ENCODE measurements at regions of chr11 and their contacts with region 1.

Region 1: GRCh38 chr11:6612213-6613041 is at the start of gene TAF10:
- DNase-seq: peak; percentile 89 to 97 (median 95)
- ATAC-seq: peak; percentile 94
- H3K4me3 ChIP-seq: peak within 1 kb of the TSS; percentile 83
- H3K4me3 Mint-ChIP-seq: peak within 1 kb of the TSS in 6 of 10 donors; percentile 84 to 94 (median 92)
- H3K27ac ChIP-seq: peak within 1 kb of the TSS; percentile 91
- H3K27ac Mint-ChIP-seq: peak within 1 kb of the TSS in 5 of 9 donors; percentile 90 to 98 (median 96)
- H3K4me1 ChIP-seq: peaks cover 25% of the 10 kb centered on the region in 2 donors
- H3K4me1 Mint-ChIP-seq: peaks cover 9 to 46% (median 33%) of the 10 kb centered on the region in 7 donors
- H3K27me3 ChIP-seq: no peaks in the 10 kb centered on the region
- H3K27me3 Mint-ChIP-seq: no peaks in the 10 kb centered on the region
- total RNA-seq, gene TAF10: 116 to 135 (median 128) TPM

Region 2: GRCh38 chr11:6389921-6390724 is 222.3 kb before region 1 on chr11 and contains the start of gene SMPD1:
- CTCF ChIA-PET with region 1: no interaction called
- POLR2A ChIA-PET with region 1: no interaction called
- intact Hi-C with region 1: loop called in 1 of 2 experiments (anchors 1 kb)
- DNase-seq: peak; percentile 85 to 94 (median 92)
- ATAC-seq: peak; percentile 97
- H3K4me3 ChIP-seq: peak within 1 kb of the TSS; percentile 94
- H3K4me3 Mint-ChIP-seq: peak within 1 kb of the TSS; percentile 91 to 98 (median 94)
- H3K27ac ChIP-seq: peak within 1 kb of the TSS; percentile 95
- H3K27ac Mint-ChIP-seq: peak within 1 kb of the TSS; percentile 93 to 100 (median 99)
- H3K4me1 ChIP-seq: peaks cover 25 to 53% of the 10 kb centered on the region in 2 donors
- H3K4me1 Mint-ChIP-seq: peaks cover 31 to 74% (median 66%) of the 10 kb centered on the region in 7 donors
- H3K27me3 ChIP-seq: no peaks in the 10 kb centered on the region
- H3K27me3 Mint-ChIP-seq: peaks cover 0 to 13% (median 0%) of the 10 kb centered on the region in 5 donors
- total RNA-seq, gene SMPD1: 43.0 to 70.9 (median 55.4) TPM

Region 3: DNA sequence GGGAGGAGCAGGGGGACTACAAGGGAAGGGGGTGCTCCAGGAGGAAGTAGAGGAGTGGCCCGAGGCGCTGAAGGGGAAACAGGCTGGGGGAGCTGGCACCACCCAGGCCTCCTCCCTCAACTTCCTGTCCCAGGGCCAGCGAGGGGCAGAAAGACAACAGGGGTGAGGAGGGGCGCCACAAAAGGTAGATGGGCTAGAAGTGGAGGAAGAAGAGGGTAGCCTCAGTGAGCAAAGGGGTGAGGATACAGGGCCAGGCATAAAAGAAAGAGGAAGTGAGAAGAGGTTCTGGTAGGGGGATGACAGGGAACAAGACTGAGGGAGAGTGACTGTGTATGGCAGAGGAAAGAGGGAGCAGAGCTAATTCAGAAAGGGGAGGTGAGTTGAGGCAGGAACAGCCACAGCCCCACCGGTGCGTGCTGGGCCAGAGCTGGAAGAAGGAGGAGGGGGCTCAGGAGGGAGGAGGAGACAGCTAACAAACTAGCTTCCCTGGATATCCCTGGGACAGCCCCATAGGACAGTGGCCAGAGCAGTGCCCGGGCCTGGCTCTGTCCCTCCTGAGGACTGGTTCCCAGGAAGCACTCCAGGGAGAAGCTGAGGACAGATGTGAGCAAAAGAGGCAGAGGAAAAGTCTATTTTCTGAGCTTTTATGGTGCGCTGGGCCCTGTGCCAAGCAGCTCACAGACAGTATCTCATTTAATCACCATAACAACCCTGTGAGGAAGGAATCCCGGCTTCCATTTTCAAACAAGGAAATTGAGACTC is 34.7 kb after region 1 on chr11:
- CTCF ChIA-PET with region 1: interaction called, 7 read pairs
- POLR2A ChIA-PET with region 1: interaction called, 57 read pairs
- intact Hi-C with region 1: loop called (anchors 1 to 5 kb)
- DNase-seq: peak in 6 of 9 donors; percentile 32 to 39 (median 35)
- ATAC-seq: peak; percentile 73
- H3K4me3 ChIP-seq: peak overlapping the region; percentile 35
- H3K4me3 Mint-ChIP-seq: no peak overlapping the region
- H3K27ac ChIP-seq: peak overlapping the region; percentile 72
- H3K27ac Mint-ChIP-seq: no peak overlapping the region
- H3K4me1 ChIP-seq: peaks cover 21 to 49% of the 10 kb centered on the region in 2 donors
- H3K4me1 Mint-ChIP-seq: no peaks in the 10 kb centered on the region
- H3K27me3 ChIP-seq: no peaks in the 10 kb centered on the region
- H3K27me3 Mint-ChIP-seq: no peaks in the 10 kb centered on the region

Region 4: GRCh38 chr11:6667733-6668374 is 55.4 kb after region 1 on chr11:
- CTCF ChIA-PET with region 1: interaction called, 25 read pairs
- POLR2A ChIA-PET with region 1: interaction called, 43 read pairs
- intact Hi-C with region 1: loop called in 1 of 2 experiments (anchors 1 kb)
- DNase-seq: peak in 8 of 9 donors; percentile 23 to 53 (median 46)
- ATAC-seq: peak; percentile 87
- H3K4me3 ChIP-seq: no peak overlapping the region
- H3K4me3 Mint-ChIP-seq: peak overlapping the region in 3 of 10 donors; percentile 18 to 65 (median 39)
- H3K27ac ChIP-seq: peak overlapping the region; percentile 29
- H3K27ac Mint-ChIP-seq: peak overlapping the region; percentile 38 to 91 (median 64)
- H3K4me1 ChIP-seq: peaks cover 10 to 43% of the 10 kb centered on the region in 2 donors
- H3K4me1 Mint-ChIP-seq: peaks cover 35 to 85% (median 70%) of the 10 kb centered on the region in 7 donors
- H3K27me3 ChIP-seq: no peaks in the 10 kb centered on the region
- H3K27me3 Mint-ChIP-seq: peaks cover 0 to 13% (median 0%) of the 10 kb centered on the region in 5 donors

Region 5: DNA sequence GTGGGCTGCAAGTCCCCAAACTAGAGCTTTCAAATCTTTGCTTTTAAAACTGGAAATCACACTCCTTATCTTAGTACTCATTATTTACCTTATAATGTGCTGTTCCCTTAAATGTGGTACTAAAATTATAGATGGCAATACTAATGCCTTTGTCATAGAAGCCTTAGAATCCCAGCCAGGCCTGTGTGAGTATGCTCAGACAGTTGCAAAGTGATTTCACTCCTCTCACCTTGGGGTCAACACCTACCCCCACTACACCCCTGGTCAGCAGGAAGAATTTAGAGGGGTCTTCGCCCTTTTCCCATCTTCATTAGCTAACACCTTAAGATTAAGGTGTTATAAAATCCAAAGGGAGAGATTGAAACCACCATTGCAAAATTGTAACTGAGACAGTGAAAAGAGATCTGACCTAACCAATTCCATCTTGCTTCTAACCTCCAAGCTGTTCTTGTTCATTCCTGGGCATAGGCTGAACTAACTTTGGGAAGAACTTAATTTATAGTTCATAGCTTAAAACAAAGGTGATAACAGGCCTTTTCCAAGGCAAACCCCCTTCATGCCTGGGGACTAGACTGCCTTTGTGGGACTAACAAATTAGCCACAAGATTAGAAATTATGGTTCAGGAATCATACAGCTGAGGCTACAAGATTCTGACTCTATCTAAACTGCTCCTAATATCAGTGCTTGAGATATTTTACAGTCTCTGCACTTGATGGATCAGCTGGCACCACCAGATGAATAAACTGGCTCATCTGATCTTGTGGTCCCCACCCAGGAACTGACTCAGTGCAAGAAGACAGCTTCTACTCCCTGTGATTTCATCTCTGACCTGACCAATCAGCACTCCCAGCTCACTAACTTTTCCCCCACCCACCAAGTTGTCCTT is 81.2 kb after region 1 on chr11:
- CTCF ChIA-PET with region 1: interaction called, 5 read pairs
- POLR2A ChIA-PET with region 1: interaction called, 10 read pairs
- intact Hi-C with region 1: no loop called
- DNase-seq: peak in 5 of 9 donors; percentile 19 to 52 (median 33)
- ATAC-seq: peak; percentile 47
- H3K4me3 ChIP-seq: no peak overlapping the region
- H3K4me3 Mint-ChIP-seq: peak overlapping the region in 2 of 10 donors; percentile 22 to 52
- H3K27ac ChIP-seq: no peak overlapping the region
- H3K27ac Mint-ChIP-seq: peak overlapping the region; percentile 6 to 86 (median 65)
- H3K4me1 ChIP-seq: peaks cover 0 to 9% of the 10 kb centered on the region in 2 donors
- H3K4me1 Mint-ChIP-seq: peaks cover 11 to 34% (median 20%) of the 10 kb centered on the region in 7 donors
- H3K27me3 ChIP-seq: no peaks in the 10 kb centered on the region
- H3K27me3 Mint-ChIP-seq: no peaks in the 10 kb centered on the region